H1 (cell line): ENCODE measurements at regions of chr17 and their contacts with region 1.

Region 1: GRCh38 chr17:38982858-38983746 is 15.9 kb upstream of the FBXO47 start:
- DNase-seq: peak; percentile 13 to 55
- H3K4me3 ChIP-seq: no peak overlapping the region
- H3K27ac ChIP-seq: no peak overlapping the region
- H3K4me1 ChIP-seq: no peaks in the 10 kb centered on the region
- H3K27me3 ChIP-seq: no peaks in the 10 kb centered on the region
- CTCF ChIP-seq: peak in 2 of 3 experiments; percentile 79; a peak in 3 of 4 replicates
- EP300 ChIP-seq: no peak
- POLR2A ChIP-seq: no peak
- RAD21 ChIP-seq: peak; percentile 90 to 91

Region 2: DNA sequence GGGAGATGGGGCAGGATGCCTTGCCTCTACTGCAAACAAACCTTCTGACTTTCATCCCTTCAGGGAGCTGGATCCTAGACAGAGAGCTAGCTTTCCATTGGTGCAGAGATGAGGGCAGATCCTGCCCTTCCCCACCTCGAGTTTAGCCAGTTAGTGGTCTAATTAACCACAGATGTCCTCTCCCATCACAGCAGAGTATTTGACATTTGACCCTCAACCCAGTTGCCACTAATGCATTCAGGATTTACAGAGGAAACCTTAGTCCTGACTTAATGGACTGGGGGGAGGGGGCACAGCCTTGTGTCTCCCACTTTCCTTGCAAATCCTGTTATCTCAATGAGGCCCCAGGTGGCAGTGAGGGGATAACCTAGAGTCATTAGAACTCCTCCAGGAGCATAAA is 193.9 kb before region 1 on chr17:
- CTCF ChIA-PET with region 1: no interaction called
- POLR2A ChIA-PET with region 1: no interaction called
- DNase-seq: no peak
- H3K4me3 ChIP-seq: peak overlapping the region in 2 of 4 experiments; percentile 3; a peak in 3 of 8 replicates
- H3K27ac ChIP-seq: no peak overlapping the region
- H3K4me1 ChIP-seq: peaks cover 0 to 5% (median under 1%) of the 10 kb centered on the region in 4 experiments; a peak in 3 of 7 replicates
- H3K27me3 ChIP-seq: no peaks in the 10 kb centered on the region
- CTCF ChIP-seq: no peak
- EP300 ChIP-seq: no peak
- POLR2A ChIP-seq: no peak
- RAD21 ChIP-seq: no peak

Region 3: GRCh38 chr17:38922538-38923297 is 60.4 kb before region 1 on chr17:
- CTCF ChIA-PET with region 1: interaction called, 10 read pairs
- POLR2A ChIA-PET with region 1: no interaction called
- DNase-seq: peak in 1 of 2 experiments; percentile 63
- H3K4me3 ChIP-seq: no peak overlapping the region
- H3K27ac ChIP-seq: peak overlapping the region; percentile 53; the same call in 1 of the 2 replicates
- H3K4me1 ChIP-seq: peaks cover 0 to 13% (median 9%) of the 10 kb centered on the region in 4 experiments; a peak in 6 of 7 replicates
- H3K27me3 ChIP-seq: no peaks in the 10 kb centered on the region
- CTCF ChIP-seq: peak in 2 of 3 experiments; percentile 4 to 21; a peak in 2 of 4 replicates
- EP300 ChIP-seq: no peak
- POLR2A ChIP-seq: no peak
- RAD21 ChIP-seq: peak in 1 of 2 experiments; percentile 1; a peak in 2 of 4 replicates

Region 4: GRCh38 chr17:39011907-39012468 is 28.9 kb after region 1 on chr17:
- CTCF ChIA-PET with region 1: interaction called, 14 read pairs
- POLR2A ChIA-PET with region 1: interaction called, 6 read pairs
- DNase-seq: peak; percentile 29 to 77
- H3K4me3 ChIP-seq: peak overlapping the region; percentile 20 to 51 (median 37); a peak in 7 of 8 replicates
- H3K27ac ChIP-seq: no peak overlapping the region
- H3K4me1 ChIP-seq: peaks cover 0 to 4% (median 0%) of the 10 kb centered on the region in 4 experiments; a peak in 3 of 7 replicates
- H3K27me3 ChIP-seq: no peaks in the 10 kb centered on the region
- CTCF ChIP-seq: peak; percentile 26 to 65 (median 52); a peak in 2 of 4 replicates
- EP300 ChIP-seq: no peak
- POLR2A ChIP-seq: no peak
- RAD21 ChIP-seq: 0 out of 4 replicates have a peak, but pooled peaks of 1 of the 2 experiments have one; percentile 7

Region 5: DNA sequence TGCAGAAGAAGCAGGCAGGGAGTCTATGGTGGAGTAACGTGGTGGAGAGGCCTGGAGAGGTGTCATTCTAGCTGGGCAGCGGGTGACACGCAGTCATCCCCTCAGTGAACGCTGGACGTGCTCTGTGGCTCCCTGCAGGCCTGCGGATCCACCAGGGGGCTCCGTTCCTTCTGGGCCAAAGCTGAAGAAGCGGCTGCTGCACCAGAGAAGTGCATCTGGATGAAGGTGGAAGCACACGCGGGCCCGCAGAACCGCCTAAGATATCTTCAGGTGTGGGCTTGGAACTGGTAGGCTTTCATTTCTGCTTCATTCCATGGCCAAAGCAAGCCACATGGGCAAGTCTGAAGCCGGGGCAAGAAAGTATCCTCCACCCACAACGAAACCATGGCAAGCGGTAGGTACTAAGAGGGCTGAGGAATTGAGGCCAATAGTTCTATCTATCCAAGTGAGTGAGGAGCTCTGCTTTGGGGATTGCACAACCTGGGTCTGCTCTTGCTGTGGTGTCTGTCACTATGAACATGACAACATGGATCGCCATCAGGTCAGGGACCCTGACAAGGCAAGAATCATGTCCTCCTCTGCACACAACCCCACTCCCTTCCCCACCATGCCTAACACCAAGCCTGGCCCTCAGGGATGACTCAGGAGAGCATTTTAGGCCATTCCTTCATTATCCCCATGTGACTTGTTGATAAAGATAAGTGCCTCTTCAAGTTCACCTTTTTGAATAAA is 63.0 kb after region 1 on chr17:
- CTCF ChIA-PET with region 1: interaction called, 27 read pairs
- POLR2A ChIA-PET with region 1: no interaction called
- DNase-seq: peak in 1 of 2 experiments; percentile 78
- H3K4me3 ChIP-seq: no peak overlapping the region
- H3K27ac ChIP-seq: peak overlapping the region; percentile 97
- H3K4me1 ChIP-seq: peaks cover 0 to 5% (median 0%) of the 10 kb centered on the region in 4 experiments; a peak in 4 of 7 replicates
- H3K27me3 ChIP-seq: no peaks in the 10 kb centered on the region
- CTCF ChIP-seq: peak; percentile 72 to 90 (median 77)
- EP300 ChIP-seq: no peak
- POLR2A ChIP-seq: peak in 1 of 2 experiments; percentile 63; a peak in 1 of 3 replicates
- RAD21 ChIP-seq: peak; percentile 42 to 65; a peak in 3 of 4 replicates

Region 6: GRCh38 chr17:39094607-39095308 is 111.7 kb after region 1 on chr17:
- CTCF ChIA-PET with region 1: interaction called, 45 read pairs
- POLR2A ChIA-PET with region 1: no interaction called
- DNase-seq: no peak
- H3K4me3 ChIP-seq: no peak overlapping the region
- H3K27ac ChIP-seq: no peak overlapping the region
- H3K4me1 ChIP-seq: peaks cover 0 to 3% (median 2%) of the 10 kb centered on the region in 4 experiments; a peak in 2 of 7 replicates
- H3K27me3 ChIP-seq: no peaks in the 10 kb centered on the region
- CTCF ChIP-seq: no peak
- EP300 ChIP-seq: no peak
- POLR2A ChIP-seq: no peak
- RAD21 ChIP-seq: no peak

Region 7: GRCh38 chr17:39174907-39175694 is 192.0 kb after region 1 on chr17:
- CTCF ChIA-PET with region 1: interaction called, 63 read pairs
- POLR2A ChIA-PET with region 1: interaction called, 3 read pairs
- DNase-seq: peak; percentile 82 to 92
- H3K4me3 ChIP-seq: peak overlapping the region in 1 of 4 experiments; percentile 22; a peak in 1 of 8 replicates
- H3K27ac ChIP-seq: no peak overlapping the region
- H3K4me1 ChIP-seq: peaks cover 0 to 14% (median 10%) of the 10 kb centered on the region in 4 experiments; a peak in 6 of 7 replicates
- H3K27me3 ChIP-seq: no peaks in the 10 kb centered on the region
- CTCF ChIP-seq: peak; percentile 87 to 92 (median 91)
- EP300 ChIP-seq: no peak
- POLR2A ChIP-seq: peak in 1 of 2 experiments; percentile 60; a peak in 1 of 3 replicates
- RAD21 ChIP-seq: peak; percentile 71 to 83